Cardiac septum (tissue), 1 donor: ENCODE measurements at regions of chr10 and their contacts with region 1.

Region 1: DNA sequence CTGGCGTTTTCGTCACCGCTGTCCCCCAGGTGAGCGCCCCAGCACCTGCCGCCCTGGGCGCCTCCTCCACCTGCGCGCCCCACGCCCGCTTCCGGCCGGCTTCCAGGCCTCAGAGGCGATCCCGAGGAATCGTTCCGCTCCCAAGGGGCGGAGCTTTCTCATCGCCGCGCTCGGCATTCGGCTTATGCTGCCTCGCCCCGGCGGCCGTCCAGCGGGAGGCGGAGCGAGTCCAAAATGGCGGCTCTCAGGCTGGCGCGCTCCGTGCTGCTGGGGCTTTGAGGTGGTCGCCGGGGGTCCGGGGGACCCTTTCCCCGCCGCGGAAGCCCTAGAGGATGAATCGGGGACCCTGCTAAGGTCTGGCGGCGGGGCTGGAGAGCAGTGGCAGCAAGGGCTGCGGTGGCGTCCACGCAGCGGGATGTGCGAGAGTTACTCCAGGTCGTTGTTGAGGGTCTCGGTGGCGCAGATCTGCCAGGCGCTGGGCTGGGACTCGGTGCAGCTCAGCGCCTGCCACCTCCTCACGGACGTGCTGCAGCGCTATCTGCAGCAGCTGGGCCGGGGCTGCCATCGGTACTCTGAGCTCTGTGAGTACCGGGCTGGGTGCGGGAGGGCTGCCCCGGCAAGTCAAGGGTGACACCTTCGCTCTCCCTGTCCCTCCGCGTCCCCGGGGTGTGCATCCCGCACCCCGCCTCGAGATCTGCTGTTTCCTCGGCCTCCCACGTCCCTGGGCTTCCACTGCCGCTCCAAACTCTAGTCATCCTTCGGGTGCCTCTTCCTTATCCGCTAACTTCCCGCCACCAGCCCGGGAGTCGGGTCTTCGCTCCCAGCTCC is at the start of gene TAF3:
- DNase-seq: peak; percentile 96
- total RNA-seq, gene TAF3: 12.4 TPM

Region 2: DNA sequence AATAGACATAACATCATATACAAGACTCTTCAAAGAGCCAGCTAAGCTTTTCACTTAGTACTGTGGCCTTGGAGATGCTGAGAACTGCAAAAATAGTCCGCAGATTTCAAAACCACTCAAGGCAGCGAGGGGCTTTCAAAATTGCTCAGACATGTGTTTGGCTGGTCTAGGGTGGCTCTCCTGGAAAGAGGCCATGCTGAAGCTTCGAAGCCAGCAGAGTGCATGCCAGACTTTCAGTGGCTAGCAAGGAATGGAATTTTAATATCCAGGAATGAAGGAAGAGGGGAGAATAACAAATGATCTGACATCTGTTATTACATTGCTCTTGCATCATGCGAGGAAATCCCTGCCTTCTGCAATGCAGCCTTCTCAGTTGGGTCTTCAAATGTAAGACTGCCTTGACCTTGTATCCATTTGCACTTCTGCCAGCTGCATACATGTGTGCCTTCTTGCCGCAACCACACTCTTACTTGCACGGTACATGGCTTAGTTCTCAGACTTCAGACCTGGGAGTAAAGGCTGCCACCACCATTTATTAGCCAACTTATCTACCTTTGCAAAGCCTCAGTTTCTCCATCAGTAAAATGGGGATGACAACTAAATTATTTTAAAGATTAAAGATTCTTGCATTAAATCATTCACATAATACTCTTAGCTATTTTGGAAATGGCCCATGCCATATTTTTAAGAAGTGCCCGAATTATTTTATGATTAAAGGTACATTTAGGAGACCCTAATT is 207.7 kb before region 1 on chr10:
- intact Hi-C with region 1: no loop called
- DNase-seq: no peak

Region 3: GRCh38 chr10:7672341-7673134 is 146.0 kb before region 1 on chr10:
- intact Hi-C with region 1: no loop called
- DNase-seq: no peak

Region 4: GRCh38 chr10:7787857-7788638 is 30.5 kb before region 1 on chr10 and contains the starts of genes ATP5F1C and KIN:
- intact Hi-C with region 1: loop called (anchors 2 kb)
- DNase-seq: peak; percentile 98
- total RNA-seq, gene ATP5F1C: 570 TPM
- total RNA-seq, gene KIN: 7.5 TPM